Right ventricle myocardium superior (tissue), 1 donor: ENCODE measurements at regions of chr6 and their contacts with region 1.

Region 1: DNA sequence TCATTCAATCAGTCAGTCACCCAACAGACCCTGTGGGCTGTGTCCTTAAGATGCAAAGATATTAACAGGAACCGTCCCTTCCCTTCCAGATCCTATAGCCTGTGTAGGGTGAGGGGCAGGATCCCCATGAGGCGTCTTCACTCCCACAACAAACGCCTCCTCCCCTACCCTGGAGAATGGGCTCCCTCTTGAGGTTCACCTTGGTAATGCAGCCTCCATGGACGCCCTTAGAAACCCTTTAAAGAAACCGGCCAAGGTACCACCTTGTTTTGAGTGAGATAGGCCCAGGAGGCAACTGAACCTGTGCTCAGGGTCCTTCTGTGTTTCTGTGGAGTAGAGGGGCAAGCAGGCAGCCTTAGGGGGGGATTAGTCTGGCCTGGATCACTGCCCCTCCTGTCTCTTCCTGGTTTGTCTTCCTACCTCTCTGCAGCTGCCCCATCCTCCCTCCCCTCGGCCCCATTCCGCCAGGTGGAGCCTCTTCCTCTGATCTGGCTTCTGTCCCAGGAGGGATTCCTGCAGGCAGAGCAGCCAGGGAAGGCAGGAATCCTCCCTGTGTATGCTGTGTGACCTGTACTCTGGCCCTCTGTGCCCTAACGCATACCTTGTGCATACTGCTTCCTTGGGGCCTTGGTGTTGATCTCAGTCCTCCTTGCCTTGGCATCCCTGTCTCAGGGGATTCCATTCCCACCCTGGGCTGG is 6.6 kb upstream of the GUCA1A start:
- DNase-seq: peak; percentile 50
- ATAC-seq: peak; percentile 90

Region 2: GRCh38 chr6:41779793-41780545 is 386.6 kb before region 1 on chr6 and contains the start of gene FRS3:
- intact Hi-C with region 1: loop called (anchors 10 kb)
- DNase-seq: peak; percentile 99
- ATAC-seq: peak; percentile 96
- total RNA-seq, gene FRS3: 4.8 TPM

Region 3: GRCh38 chr6:42075159-42075838 is 91.3 kb before region 1 on chr6:
- intact Hi-C with region 1: loop called (anchors 2 kb)
- DNase-seq: peak; percentile 87
- ATAC-seq: peak; percentile 84

Region 4: GRCh38 chr6:42122718-42123151 is 43.9 kb before region 1 on chr6:
- intact Hi-C with region 1: no loop called
- DNase-seq: peak; percentile 23
- ATAC-seq: no peak

Region 5: GRCh38 chr6:42251911-42252637 is 85.5 kb after region 1 on chr6:
- intact Hi-C with region 1: no loop called
- DNase-seq: peak; percentile 85
- ATAC-seq: peak; percentile 77